Heart right ventricle (tissue), 16 donors: ENCODE measurements at regions of chr14 and their contacts with region 1.

Region 1: DNA sequence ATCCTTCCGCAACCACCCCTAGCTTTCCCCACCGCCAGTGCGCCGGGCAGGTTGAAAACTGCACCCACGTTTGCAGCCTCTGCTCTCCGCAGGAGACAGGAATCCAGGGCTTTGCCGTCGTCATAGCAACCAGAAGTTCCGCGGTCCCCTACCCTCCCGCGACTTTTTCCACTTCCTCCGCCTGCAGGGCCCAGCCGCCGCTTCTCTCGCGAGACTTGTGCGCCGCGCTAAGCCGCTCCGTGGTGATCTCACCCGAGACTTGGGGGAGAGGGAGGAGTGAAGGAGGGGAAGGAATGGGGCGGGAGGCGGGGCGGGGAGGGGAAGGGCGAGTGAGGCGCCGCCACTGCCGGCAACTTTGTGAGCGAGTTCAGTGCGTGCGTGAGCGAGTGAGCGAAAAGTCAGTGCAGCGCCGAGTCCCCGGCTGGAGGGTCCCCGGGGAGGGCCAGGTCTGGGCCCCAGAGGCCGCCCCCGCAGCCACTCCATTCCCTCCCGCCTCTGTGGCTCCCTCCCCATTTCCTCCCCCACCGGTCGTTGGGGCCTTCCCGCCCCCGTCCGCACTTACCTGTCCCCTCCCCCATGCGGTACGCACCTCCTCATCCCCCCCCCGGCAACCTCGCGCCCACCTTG is 413.0 kb downstream of the PCNX1 start:
- DNase-seq: peak; percentile 98 to 99
- ATAC-seq: peak; percentile 95 to 99 (median 98)
- H3K4me3 ChIP-seq: peak within 1 kb of the TSS; percentile 79 to 99 (median 96)
- H3K27ac ChIP-seq: peak within 1 kb of the TSS; percentile 83 to 97 (median 92)
- H3K4me1 ChIP-seq: peaks cover 0 to 52% (median 21%) of the 10 kb centered on the region in 9 donors
- H3K27me3 ChIP-seq: no peaks in the 10 kb centered on the region
- CTCF ChIP-seq: no peak

Region 2: DNA sequence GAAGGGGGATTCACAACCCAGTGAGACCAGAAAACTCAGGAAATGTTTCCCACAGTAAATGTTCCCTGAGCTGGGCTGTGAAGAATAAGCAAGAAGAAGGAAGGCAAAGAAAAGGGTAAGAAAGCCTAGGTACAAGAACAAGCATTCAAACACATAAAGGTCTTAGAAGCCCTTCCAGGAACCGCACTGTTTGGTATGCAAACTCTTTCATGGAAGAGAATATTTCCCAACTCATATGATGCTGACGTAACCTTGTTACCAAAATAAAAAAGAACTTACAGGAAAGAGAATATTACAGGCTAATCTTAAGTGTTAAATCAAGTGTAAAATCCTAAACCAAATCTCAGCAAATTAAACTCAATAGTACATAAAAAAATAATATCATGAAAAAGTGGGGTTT is 743.3 kb before region 1 on chr14:
- intact Hi-C with region 1: no loop called
- DNase-seq: no peak
- ATAC-seq: no peak
- H3K4me3 ChIP-seq: no peak overlapping the region
- H3K27ac ChIP-seq: no peak overlapping the region
- H3K4me1 ChIP-seq: no peaks in the 10 kb centered on the region
- H3K27me3 ChIP-seq: no peaks in the 10 kb centered on the region
- CTCF ChIP-seq: no peak

Region 3: DNA sequence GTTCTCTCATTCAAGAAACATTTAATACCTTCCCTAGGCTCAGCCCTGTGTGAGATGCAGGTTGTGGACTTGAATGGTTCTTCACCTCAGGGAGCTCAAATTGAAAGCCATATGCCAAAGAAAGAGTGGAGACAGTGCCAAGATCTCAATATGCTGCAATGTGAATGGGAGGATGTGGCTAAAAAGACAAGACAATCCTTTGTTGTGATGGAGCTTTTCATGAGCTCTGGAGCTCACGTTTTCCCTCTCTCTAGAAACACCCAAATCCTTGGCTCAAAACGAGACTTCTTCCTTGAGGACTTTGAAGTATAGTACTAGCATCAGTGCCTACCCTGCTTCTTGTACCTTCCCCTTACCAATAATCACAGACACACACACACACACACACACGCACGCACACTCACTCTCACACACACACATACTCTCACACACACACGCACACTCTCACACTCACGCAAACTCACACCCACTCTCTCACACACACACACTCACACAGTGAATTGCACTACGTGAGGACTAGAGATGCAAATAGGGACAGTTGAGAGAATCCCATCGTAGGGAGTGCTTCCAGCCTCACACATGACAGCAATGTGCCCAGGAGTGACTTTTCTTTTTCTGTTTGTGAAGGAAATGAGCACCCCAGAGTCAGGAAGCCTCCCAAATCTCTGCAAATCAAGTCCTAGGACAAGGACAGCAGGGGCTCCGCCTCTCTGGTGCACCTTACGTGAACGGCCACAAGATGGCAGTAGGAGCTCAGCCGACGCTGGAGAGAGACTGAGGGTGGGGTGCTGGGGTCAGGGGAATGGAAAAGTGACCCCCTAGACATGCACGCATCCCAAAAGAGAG is 181.5 kb before region 1 on chr14:
- intact Hi-C with region 1: loop called in 1 of 10 experiments (anchors 5 kb)
- DNase-seq: peak; percentile 31 to 44
- ATAC-seq: peak; percentile 63 to 88 (median 82)
- H3K4me3 ChIP-seq: peak overlapping the region in 1 of 10 donors; percentile 24
- H3K27ac ChIP-seq: no peak overlapping the region
- H3K4me1 ChIP-seq: peaks cover 0 to 33% (median 0%) of the 10 kb centered on the region in 9 donors
- H3K27me3 ChIP-seq: no peaks in the 10 kb centered on the region
- CTCF ChIP-seq: peak; percentile 89 to 98 (median 93)

Region 4: DNA sequence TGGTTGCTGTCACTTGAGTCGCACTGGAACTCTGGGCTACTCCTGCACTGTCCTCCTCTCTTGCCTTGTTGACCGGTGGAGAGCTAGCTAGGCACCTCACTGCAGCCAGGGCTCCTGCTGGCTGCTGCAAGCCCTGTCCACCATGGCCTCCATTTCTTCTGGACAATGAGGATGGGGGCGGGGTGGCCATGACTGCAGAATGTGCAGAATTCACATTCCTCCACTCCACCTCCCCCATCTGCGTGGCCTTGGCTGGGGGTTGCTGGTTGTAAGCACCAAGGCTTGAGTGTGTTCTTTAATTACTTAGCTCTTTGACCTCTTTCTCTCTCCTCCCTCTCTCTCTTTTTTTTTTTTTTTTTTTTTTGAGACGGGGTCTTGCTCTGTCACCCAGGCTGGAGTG is 164.5 kb before region 1 on chr14:
- intact Hi-C with region 1: loop called in 1 of 10 experiments (anchors 10 kb)
- DNase-seq: no peak
- ATAC-seq: no peak
- H3K4me3 ChIP-seq: no peak overlapping the region
- H3K27ac ChIP-seq: no peak overlapping the region
- H3K4me1 ChIP-seq: no peaks in the 10 kb centered on the region
- H3K27me3 ChIP-seq: peaks cover 0 to 4% (median 0%) of the 10 kb centered on the region in 7 donors
- CTCF ChIP-seq: no peak

Region 5: DNA sequence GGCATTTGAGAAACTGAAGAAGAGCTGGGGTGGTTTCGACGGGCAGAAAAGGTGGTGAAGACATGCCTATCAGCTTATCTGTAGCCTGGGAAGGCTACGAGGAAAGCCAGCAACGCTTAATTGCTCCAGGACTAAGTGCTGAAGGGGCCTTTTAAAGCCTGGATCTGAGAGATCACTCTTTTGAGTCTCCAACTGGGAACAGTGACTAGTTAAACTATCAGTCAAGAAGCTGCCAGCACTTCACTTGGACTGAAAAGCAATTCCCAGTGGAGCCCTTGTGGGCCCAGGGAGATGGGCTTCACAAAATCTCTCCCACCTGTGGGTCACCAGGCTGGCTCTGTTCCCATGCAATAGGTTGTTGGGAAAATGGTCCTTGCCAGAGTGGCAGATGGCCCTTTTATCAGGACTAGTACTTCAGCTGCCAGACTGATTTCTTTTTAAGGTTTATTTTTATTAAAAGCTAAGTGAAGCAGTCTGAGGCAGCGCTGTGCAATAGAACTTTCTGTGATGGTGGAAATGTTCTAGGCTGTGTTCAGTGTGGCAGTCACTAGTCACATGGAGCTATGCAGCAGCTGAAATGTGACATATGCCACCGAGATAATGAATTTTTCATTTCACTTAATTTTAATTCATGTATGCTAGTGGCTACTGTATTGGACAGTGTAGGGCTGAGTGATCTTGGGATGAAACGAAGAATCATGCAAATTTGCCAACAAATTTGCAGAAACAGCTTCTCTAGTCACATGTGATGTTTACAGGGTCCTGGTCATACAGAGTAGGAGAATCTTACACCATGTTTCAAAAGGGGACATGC is 136.1 kb before region 1 on chr14:
- intact Hi-C with region 1: no loop called
- DNase-seq: no peak
- ATAC-seq: peak in 1 of 8 donors; percentile 35
- H3K4me3 ChIP-seq: no peak overlapping the region
- H3K27ac ChIP-seq: no peak overlapping the region
- H3K4me1 ChIP-seq: peaks cover 0 to 9% (median 0%) of the 10 kb centered on the region in 9 donors
- H3K27me3 ChIP-seq: peaks cover 0 to 11% (median 0%) of the 10 kb centered on the region in 7 donors
- CTCF ChIP-seq: no peak

Region 6: GRCh38 chr14:71206766-71207371 is 113.4 kb before region 1 on chr14:
- intact Hi-C with region 1: no loop called
- DNase-seq: peak; percentile 37 to 80
- ATAC-seq: peak; percentile 86 to 100 (median 98)
- H3K4me3 ChIP-seq: no peak overlapping the region
- H3K27ac ChIP-seq: peak overlapping the region in 5 of 10 donors; percentile 14 to 58 (median 48)
- H3K4me1 ChIP-seq: peaks cover 0 to 15% (median 0%) of the 10 kb centered on the region in 9 donors
- H3K27me3 ChIP-seq: peaks cover 0 to 3% (median 0%) of the 10 kb centered on the region in 7 donors
- CTCF ChIP-seq: no peak

Region 7: GRCh38 chr14:71586131-71586897 is 266.1 kb after region 1 on chr14:
- intact Hi-C with region 1: loop called in 1 of 10 experiments (anchors 10 kb)
- DNase-seq: no peak
- ATAC-seq: peak in 7 of 8 donors; percentile 25 to 82 (median 66)
- H3K4me3 ChIP-seq: peak overlapping the region in 6 of 10 donors; percentile 21 to 38 (median 35)
- H3K27ac ChIP-seq: peak overlapping the region in 1 of 10 donors; percentile 0
- H3K4me1 ChIP-seq: peaks cover 0 to 35% (median 10%) of the 10 kb centered on the region in 9 donors
- H3K27me3 ChIP-seq: no peaks in the 10 kb centered on the region
- CTCF ChIP-seq: no peak

Region 8: DNA sequence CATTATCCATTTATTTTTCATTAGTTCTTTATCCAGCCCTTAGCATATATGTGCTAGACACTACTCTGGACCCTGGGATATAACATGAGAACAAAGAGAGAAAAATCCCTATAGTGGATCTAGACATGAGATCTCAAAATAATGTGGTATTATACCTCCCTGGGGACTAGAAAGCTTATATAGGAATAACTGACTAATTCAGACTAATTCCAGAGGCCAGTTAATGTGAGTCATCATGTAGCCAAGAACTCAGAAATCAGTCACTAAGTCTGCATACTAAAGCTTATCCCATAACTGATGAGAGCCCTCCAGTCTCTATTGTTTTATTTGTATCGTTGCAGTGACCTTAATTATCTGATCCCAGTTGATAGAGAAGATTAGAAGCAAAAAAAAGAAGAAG is 344.9 kb after region 1 on chr14:
- intact Hi-C with region 1: loop called in 1 of 10 experiments (anchors 10 kb)
- DNase-seq: no peak
- ATAC-seq: no peak
- H3K4me3 ChIP-seq: no peak overlapping the region
- H3K27ac ChIP-seq: no peak overlapping the region
- H3K4me1 ChIP-seq: peaks cover 0 to 4% (median 0%) of the 10 kb centered on the region in 9 donors
- H3K27me3 ChIP-seq: no peaks in the 10 kb centered on the region
- CTCF ChIP-seq: no peak

Region 9: GRCh38 chr14:71753126-71753830 is 433.1 kb after region 1 on chr14:
- intact Hi-C with region 1: loop called in 8 of 10 experiments (anchors 2 to 10 kb)
- DNase-seq: peak; percentile 89 to 96
- ATAC-seq: peak; percentile 81 to 94 (median 87)
- H3K4me3 ChIP-seq: peak overlapping the region in 3 of 10 donors; percentile 1 to 24 (median 18)
- H3K27ac ChIP-seq: peak overlapping the region in 1 of 10 donors; percentile 22
- H3K4me1 ChIP-seq: peaks cover 0 to 11% (median 10%) of the 10 kb centered on the region in 9 donors
- H3K27me3 ChIP-seq: no peaks in the 10 kb centered on the region
- CTCF ChIP-seq: peak; percentile 81 to 99 (median 95)